ENCODE measurements at regions of chr6 and their contacts with region 1.

Region 1: DNA sequence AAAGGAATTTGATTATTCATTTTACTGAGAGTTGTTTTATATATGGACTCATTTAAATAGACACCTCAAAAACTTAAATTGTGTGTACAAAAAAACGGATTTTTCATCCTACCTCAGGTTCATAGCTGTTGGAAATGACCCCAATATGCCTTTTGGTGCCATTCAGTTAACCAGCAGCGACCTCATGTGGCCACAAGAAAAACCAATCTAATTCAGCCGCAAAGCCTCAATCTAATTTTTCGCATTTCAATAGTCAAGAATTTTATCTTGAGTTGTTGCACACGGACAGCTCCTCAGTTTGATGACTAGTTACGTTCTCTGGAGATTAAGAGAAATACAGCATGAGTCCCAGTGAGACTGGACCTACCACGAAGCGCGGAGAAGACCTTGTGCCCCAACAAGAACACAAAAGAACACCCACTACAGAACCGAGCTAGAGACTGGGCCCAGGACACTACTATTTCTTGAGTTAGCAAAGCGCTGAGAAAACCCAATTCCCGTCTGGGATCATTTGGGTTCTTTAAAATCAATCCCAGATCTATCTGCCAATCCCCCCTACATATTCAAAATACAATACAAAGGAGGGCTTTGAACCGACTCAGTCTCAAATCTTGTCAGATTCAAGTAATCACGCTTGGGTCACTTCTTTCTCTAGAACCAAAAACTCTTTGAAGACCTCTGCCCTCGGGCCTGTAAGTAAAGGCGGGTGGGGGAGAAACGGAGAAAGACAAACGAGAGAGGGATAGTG is 1.1 kb downstream of the TCP11 start:
- DNase-seq: no peak

Region 2: GRCh38 chr6:34986845-34987246 is 153.2 kb before region 1 on chr6:
- intact Hi-C with region 1: loop called (anchors 1 kb)
- DNase-seq: no peak

Region 3: GRCh38 chr6:35064757-35065440 is 75.2 kb before region 1 on chr6:
- intact Hi-C with region 1: loop called (anchors 5 kb)
- DNase-seq: no peak

Region 4: GRCh38 chr6:36131511-36132245 is 991.6 kb after region 1 on chr6:
- intact Hi-C with region 1: no loop called
- DNase-seq: no peak

Measured in cardiac septum (tissue), 1 donor.